ENCODE measurements at regions of chr4 and their contacts with region 1.

Region 1: GRCh38 chr4:168864821-168865541 is 145.1 kb downstream of the CBR4 start:
- DNase-seq: no peak
- H3K4me3 Mint-ChIP-seq: no peak overlapping the region
- H3K27ac Mint-ChIP-seq: peak overlapping the region; percentile 84
- H3K4me1 Mint-ChIP-seq: peaks cover 67% of the 10 kb centered on the region
- H3K27me3 Mint-ChIP-seq: no peaks in the 10 kb centered on the region

Region 2: DNA sequence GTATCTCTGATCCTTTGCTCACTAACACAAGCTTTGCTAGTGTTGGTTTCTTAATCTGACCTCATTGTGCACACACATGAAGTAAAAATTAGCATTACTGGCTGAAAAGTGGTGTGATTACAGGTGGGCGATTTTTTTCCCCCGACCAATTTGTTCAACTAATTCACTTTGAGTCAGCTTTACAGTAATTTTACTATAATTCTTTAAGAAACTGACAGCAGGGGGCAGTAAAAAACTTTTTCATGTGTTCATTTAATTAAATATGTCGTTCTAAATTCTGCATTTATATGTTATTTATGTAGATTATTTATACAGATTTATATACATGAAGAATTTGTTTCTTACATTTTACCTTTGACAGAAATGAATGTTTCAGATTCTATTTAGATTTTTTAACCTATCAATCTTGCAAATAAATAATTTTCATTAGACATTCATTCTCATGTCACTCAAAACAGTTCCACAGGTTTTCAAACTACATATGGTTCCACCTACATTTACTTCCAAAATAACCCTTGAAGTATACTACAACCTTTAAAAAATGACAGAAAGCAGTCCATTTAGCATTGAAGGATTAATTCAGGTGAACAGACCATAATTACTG is 350.6 kb before region 1 on chr4:
- intact Hi-C with region 1: loop called (anchors 10 kb)
- DNase-seq: no peak
- H3K4me3 Mint-ChIP-seq: no peak overlapping the region
- H3K27ac Mint-ChIP-seq: no peak overlapping the region
- H3K4me1 Mint-ChIP-seq: peaks cover 25% of the 10 kb centered on the region
- H3K27me3 Mint-ChIP-seq: peaks cover 28% of the 10 kb centered on the region

Region 3: DNA sequence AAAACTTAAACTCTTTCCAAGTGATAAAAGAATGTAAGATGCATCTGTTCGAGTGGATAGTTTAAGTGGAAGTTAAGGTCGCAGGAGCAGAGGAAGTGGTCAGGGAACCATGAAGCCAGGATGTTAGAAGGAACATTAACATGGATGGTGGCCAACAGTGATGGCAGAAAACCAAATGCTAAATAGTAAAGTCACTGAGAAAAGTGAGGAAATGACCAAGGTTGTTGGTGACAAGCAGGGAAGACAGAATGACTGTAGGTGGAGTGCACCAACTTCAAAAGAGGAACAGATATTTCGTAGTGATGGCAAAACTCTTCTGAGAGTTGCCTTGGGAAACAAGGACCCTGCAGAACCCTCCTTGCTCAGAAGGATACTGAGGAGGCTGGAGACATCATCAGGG is 142.0 kb before region 1 on chr4:
- intact Hi-C with region 1: loop called (anchors 2 kb)
- DNase-seq: no peak
- H3K4me3 Mint-ChIP-seq: no peak overlapping the region
- H3K27ac Mint-ChIP-seq: peak overlapping the region; percentile 21
- H3K4me1 Mint-ChIP-seq: peaks cover 17% of the 10 kb centered on the region
- H3K27me3 Mint-ChIP-seq: peaks cover 7% of the 10 kb centered on the region

Region 4: GRCh38 chr4:168841000-168841671 is 23.8 kb before region 1 on chr4:
- intact Hi-C with region 1: loop called (anchors 2 kb)
- DNase-seq: no peak
- H3K4me3 Mint-ChIP-seq: no peak overlapping the region
- H3K27ac Mint-ChIP-seq: no peak overlapping the region
- H3K4me1 Mint-ChIP-seq: peaks cover 52% of the 10 kb centered on the region
- H3K27me3 Mint-ChIP-seq: peaks cover 10% of the 10 kb centered on the region

Region 5: GRCh38 chr4:168877511-168878491 is 12.8 kb after region 1 on chr4:
- intact Hi-C with region 1: loop called (anchors 1 kb)
- DNase-seq: no peak
- H3K4me3 Mint-ChIP-seq: peak overlapping the region; percentile 78
- H3K27ac Mint-ChIP-seq: peak overlapping the region; percentile 69
- H3K4me1 Mint-ChIP-seq: peaks cover 35% of the 10 kb centered on the region
- H3K27me3 Mint-ChIP-seq: peaks cover 40% of the 10 kb centered on the region

Region 6: GRCh38 chr4:169079942-169080827 is 215.2 kb after region 1 on chr4:
- intact Hi-C with region 1: no loop called
- DNase-seq: no peak
- H3K4me3 Mint-ChIP-seq: peak overlapping the region; percentile 7
- H3K27ac Mint-ChIP-seq: no peak overlapping the region
- H3K4me1 Mint-ChIP-seq: peaks cover 14% of the 10 kb centered on the region
- H3K27me3 Mint-ChIP-seq: peaks cover 5% of the 10 kb centered on the region

Region 7: DNA sequence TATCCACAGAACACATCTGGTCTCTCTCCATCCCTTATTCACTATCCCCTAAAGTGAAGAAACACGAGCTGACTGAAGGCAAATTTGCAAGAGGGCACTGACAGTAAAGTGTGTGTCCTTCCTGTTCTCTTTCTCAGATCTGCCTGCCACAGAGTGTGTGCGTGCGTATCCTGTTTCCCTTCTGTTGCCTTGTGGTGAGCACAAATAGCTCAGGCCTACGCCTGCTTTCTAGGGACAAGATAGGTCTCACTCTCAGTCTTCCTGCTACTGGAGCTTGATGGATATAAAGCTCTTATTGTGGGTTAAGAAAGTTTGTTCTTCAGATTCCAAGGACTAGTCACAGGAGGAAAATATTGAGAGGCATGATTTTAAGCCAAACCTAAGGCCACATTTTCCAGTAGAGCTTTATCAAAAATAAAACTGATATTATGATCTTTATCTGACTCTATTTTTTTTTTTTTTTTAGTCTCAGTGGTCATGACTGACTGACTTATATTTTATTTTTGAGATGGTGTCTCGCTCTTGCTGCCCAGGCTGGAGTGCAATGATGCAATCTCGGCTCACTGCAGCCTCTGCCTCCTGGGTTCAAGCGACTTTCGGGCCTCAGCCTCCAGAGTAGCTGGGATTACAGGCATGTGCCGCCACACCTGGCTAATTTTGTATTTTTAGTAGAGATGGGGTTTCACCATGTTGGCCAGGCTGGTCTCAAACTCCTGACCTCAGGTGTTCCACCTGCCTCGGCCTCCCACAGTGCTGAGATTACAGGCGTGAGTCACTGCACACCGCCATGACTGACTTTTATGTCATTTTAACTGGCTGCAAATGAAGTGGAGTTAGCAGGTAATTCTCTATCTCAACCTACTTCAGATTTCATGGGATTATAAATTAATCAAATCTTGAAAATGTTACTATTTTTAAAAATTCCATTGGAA is 546.1 kb after region 1 on chr4:
- intact Hi-C with region 1: loop called (anchors 5 kb)
- DNase-seq: peak; percentile 69
- H3K4me3 Mint-ChIP-seq: peak overlapping the region; percentile 10
- H3K27ac Mint-ChIP-seq: peak overlapping the region; percentile 51
- H3K4me1 Mint-ChIP-seq: peaks cover 30% of the 10 kb centered on the region
- H3K27me3 Mint-ChIP-seq: no peaks in the 10 kb centered on the region

Region 8: DNA sequence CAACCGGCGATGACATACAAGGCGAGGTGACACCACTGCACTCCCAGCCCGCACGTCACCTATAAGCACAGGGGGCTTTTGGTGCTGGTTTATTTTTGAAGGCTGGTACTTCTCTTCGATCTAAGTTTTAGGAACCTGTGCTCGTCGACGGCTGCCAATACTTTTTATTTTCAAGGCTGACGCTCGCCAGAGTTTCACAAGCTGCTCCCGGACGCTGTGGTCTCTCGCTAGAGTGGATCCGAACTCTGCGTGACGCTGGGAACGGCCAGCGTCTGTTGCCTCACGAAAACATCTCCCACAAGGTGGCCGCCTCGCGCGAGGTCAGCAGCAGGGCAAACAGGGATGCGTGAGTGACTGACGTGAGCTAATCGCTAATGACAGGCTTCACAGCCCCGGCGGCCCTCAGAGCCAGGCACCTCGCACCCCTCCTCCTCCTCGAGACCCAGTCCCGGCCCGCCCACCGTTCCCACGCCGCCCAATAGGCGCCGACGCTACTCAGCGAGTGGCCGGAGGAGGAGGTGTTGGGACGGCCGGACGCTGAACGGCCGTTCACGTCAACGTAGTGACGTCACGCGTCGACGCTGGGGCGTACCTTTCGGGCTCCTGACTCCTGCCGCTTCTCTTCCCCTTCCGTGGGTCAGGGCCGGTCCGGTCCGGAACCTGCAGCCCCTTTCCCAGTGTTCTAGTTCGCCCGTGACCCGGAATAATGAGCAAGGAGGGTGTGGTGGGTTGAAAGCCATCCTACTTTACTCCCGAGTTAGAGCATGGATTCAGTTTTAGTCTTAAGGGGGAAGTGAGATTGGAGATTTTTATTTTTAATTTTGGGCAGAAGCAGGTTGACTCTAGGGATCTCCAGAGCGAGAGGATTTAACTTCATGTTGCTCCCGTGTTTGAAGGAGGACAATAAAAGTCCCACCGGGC is 755.2 kb after region 1 on chr4 and contains the start of gene CLCN3:
- intact Hi-C with region 1: loop called (anchors 10 kb)
- DNase-seq: peak; percentile 85
- H3K4me3 Mint-ChIP-seq: peak within 1 kb of the TSS; percentile 99
- H3K27ac Mint-ChIP-seq: peak within 1 kb of the TSS; percentile 99
- H3K4me1 Mint-ChIP-seq: peaks cover 62% of the 10 kb centered on the region
- H3K27me3 Mint-ChIP-seq: no peaks in the 10 kb centered on the region
- total RNA-seq, gene CLCN3: 23.8 and 25.6 TPM in 2 replicates